ENCODE measurements at regions of chr7 and their contacts with region 1.

Region 1: DNA sequence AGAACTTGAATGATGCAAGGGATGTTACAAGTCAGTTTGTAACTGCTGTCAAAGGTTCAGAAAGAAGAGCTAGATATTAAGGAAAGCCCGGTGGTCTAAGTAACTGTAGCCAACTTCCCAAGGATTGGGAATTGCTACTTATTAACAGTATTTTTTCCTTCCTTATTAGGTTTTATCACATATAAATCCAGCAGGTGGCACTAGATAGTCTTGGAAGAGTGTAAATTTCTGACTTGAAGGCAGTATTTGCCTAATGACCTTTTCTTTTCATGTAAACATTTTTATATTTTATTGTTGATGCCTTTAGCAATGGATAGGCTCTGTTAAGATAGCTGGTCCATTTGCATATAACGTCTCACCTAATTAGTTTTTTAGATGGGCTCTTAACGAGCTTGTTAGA is 51.2 kb downstream of the ANLN start:
- DNase-seq: peak; percentile 22
- H3K4me3 Mint-ChIP-seq: no peak overlapping the region
- H3K27ac Mint-ChIP-seq: no peak overlapping the region
- H3K4me1 Mint-ChIP-seq: no peaks in the 10 kb centered on the region
- H3K27me3 Mint-ChIP-seq: no peaks in the 10 kb centered on the region
- CTCF ChIP-seq: peak; percentile 24

Region 2: GRCh38 chr7:36389371-36390198 is 51.3 kb before region 1 on chr7 and contains the start of gene ANLN:
- CTCF ChIA-PET with region 1: interaction called, 19 read pairs
- POLR2A ChIA-PET with region 1: interaction called, 6 read pairs
- intact Hi-C with region 1: no loop called
- DNase-seq: peak; percentile 98
- H3K4me3 Mint-ChIP-seq: peak within 1 kb of the TSS; percentile 89
- H3K27ac Mint-ChIP-seq: peak within 1 kb of the TSS; percentile 94
- H3K4me1 Mint-ChIP-seq: peaks cover 41% of the 10 kb centered on the region
- H3K27me3 Mint-ChIP-seq: no peaks in the 10 kb centered on the region
- CTCF ChIP-seq: no peak
- total RNA-seq, gene ANLN: 64.3 and 104 TPM in 2 replicates

Region 3: DNA sequence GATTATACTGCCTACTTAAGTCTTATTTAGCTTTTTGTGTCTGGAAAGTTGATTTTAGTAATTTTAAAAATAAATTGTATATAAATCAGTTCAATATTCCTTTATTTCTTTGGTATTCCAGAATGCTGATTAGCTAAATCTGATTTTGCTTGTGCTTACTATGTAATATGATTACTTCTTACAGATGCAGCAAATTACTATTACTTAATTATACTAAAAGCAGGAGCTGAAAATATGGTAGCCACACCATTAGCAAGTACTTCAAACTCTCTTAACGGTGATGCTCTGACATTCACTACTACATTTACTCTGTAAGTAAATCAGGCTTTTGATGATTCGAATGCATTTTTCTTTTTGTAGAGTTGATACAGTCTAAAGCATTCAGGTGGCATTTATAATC is 17.2 kb before region 1 on chr7:
- CTCF ChIA-PET with region 1: interaction called, 26 read pairs
- POLR2A ChIA-PET with region 1: interaction called, 4 read pairs
- intact Hi-C with region 1: no loop called
- DNase-seq: no peak
- H3K4me3 Mint-ChIP-seq: no peak overlapping the region
- H3K27ac Mint-ChIP-seq: peak overlapping the region; percentile 75
- H3K4me1 Mint-ChIP-seq: peaks cover 6% of the 10 kb centered on the region
- H3K27me3 Mint-ChIP-seq: no peaks in the 10 kb centered on the region
- CTCF ChIP-seq: no peak

Region 4: GRCh38 chr7:36464271-36464670 is 23.4 kb after region 1 on chr7:
- CTCF ChIA-PET with region 1: interaction called, 15 read pairs
- POLR2A ChIA-PET with region 1: interaction called, 4 read pairs
- intact Hi-C with region 1: no loop called
- DNase-seq: no peak
- H3K4me3 Mint-ChIP-seq: no peak overlapping the region
- H3K27ac Mint-ChIP-seq: no peak overlapping the region
- H3K4me1 Mint-ChIP-seq: peaks cover 3% of the 10 kb centered on the region
- H3K27me3 Mint-ChIP-seq: no peaks in the 10 kb centered on the region
- CTCF ChIP-seq: no peak

Region 5: DNA sequence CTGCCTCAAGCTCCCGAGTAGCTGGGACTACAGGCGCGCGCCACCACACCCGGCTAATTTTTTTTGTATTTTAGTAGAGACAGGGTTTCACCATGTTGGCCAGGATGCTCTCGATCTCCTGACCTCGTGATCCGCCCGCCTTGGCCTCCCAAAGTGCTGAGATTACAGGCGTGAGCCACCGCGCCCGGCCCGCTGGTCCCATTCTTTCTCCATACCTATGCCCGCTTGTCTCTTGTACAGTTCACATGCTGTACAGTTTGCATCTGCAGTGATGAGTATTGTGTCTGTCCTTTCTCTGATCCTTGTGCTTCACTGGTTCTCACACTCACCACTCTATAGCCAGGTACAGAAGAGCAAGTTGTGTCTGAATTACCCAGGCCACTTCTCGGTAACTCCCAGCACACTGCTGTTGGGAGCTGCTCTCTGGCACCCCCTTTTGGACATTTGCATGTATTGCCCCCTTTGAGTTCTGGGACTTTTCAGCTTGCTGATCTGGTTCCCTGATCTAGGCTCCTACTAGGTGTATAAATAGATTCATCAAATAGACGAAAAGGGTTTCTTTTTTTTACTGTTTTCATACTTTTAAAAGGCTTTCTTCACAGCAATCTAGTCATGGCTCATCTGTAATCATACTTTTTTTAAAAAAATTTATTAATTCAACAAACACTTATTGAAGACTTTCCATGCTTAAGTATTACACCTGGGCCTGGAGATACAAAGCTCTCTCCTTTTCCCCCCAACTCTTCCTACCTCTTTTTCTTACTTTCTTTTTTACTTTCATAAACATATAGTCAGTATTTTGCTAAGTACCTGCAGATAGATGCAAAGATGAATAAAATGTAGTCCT is 229.9 kb after region 1 on chr7:
- CTCF ChIA-PET with region 1: interaction called, 43 read pairs
- POLR2A ChIA-PET with region 1: interaction called, 3 read pairs
- intact Hi-C with region 1: loop called (anchors 2 kb)
- DNase-seq: peak; percentile 85
- H3K4me3 Mint-ChIP-seq: no peak overlapping the region
- H3K27ac Mint-ChIP-seq: no peak overlapping the region
- H3K4me1 Mint-ChIP-seq: peaks cover 28% of the 10 kb centered on the region
- H3K27me3 Mint-ChIP-seq: no peaks in the 10 kb centered on the region
- CTCF ChIP-seq: peak; percentile 85

Region 6: GRCh38 chr7:36708767-36709166 is 267.9 kb after region 1 on chr7:
- CTCF ChIA-PET with region 1: no interaction called
- POLR2A ChIA-PET with region 1: no interaction called
- intact Hi-C with region 1: no loop called
- DNase-seq: no peak
- H3K4me3 Mint-ChIP-seq: no peak overlapping the region
- H3K27ac Mint-ChIP-seq: no peak overlapping the region
- H3K4me1 Mint-ChIP-seq: no peaks in the 10 kb centered on the region
- H3K27me3 Mint-ChIP-seq: no peaks in the 10 kb centered on the region
- CTCF ChIP-seq: no peak

Region 7: DNA sequence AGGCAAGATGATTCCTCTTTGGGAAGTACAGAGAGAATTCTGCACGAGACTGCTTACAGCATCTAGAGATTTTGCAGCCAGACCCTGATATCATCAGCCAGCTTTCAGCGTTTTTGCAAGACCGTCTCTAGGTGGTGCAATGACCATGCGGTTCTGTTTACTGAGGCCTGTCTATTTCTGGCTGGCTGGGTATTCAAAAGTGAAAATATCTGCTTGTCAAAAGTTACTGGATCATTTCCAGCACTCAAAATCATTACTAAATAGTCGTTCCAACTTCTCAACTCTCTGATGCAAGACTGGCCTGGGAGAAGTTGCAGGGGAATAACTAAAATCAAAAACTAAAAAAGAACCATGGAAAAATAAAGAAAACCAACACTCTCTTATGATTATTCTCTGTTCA is 767.6 kb after region 1 on chr7:
- CTCF ChIA-PET with region 1: interaction called, 21 read pairs
- POLR2A ChIA-PET with region 1: interaction called, 3 read pairs
- intact Hi-C with region 1: no loop called
- DNase-seq: peak; percentile 87
- H3K4me3 Mint-ChIP-seq: no peak overlapping the region
- H3K27ac Mint-ChIP-seq: no peak overlapping the region
- H3K4me1 Mint-ChIP-seq: peaks cover 16% of the 10 kb centered on the region
- H3K27me3 Mint-ChIP-seq: no peaks in the 10 kb centered on the region
- CTCF ChIP-seq: peak; percentile 49